Adrenal gland (tissue), 19 donors: ENCODE measurements at regions of chr3 and their contacts with region 1.

Region 1: GRCh38 chr3:143644370-143645089 is 203.7 kb downstream of the SLC9A9 start:
- DNase-seq: peak in 6 of 7 donors; percentile 17 to 77 (median 32)
- H3K4me3 ChIP-seq: no peak overlapping the region
- H3K27ac ChIP-seq: no peak overlapping the region
- H3K4me1 ChIP-seq: no peaks in the 10 kb centered on the region
- H3K27me3 ChIP-seq: no peaks in the 10 kb centered on the region
- CTCF ChIP-seq: peak in 5 of 6 experiments; percentile 21 to 57 (median 44)
- POLR2A ChIP-seq: no peak

Region 2: DNA sequence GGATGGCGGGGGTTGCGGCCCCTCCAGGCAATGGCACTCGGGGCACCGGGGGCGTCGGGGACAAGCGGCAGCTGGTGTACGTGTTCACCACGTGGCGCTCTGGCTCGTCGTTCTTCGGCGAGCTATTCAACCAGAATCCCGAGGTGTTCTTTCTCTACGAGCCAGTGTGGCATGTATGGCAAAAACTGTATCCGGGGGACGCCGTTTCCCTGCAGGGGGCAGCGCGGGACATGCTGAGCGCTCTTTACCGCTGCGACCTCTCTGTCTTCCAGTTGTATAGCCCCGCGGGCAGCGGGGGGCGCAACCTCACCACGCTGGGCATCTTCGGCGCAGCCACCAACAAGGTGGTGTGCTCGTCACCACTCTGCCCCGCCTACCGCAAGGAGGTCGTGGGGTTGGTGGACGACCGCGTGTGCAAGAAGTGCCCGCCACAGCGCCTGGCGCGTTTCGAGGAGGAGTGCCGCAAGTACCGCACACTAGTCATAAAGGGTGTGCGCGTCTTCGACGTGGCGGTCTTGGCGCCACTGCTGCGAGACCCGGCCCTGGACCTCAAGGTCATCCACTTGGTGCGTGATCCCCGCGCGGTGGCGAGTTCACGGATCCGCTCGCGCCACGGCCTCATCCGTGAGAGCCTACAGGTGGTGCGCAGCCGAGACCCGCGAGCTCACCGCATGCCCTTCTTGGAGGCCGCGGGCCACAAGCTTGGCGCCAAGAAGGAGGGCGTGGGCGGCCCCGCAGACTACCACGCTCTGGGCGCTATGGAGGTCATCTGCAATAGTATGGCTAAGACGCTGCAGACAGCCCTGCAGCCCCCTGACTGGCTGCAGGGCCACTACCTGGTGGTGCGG is 523.1 kb before region 1 on chr3:
- intact Hi-C with region 1: loop called in 1 of 2 experiments (anchors 10 kb)
- DNase-seq: peak; percentile 20 to 64 (median 27)
- H3K4me3 ChIP-seq: peak overlapping the region in 1 of 4 donors; percentile 59
- H3K27ac ChIP-seq: no peak overlapping the region
- H3K4me1 ChIP-seq: peaks cover 0 to 19% of the 10 kb centered on the region in 2 donors
- H3K27me3 ChIP-seq: peaks cover 17% of the 10 kb centered on the region
- CTCF ChIP-seq: peak in 4 of 6 experiments; percentile 17 to 27 (median 25)
- POLR2A ChIP-seq: no peak

Region 3: DNA sequence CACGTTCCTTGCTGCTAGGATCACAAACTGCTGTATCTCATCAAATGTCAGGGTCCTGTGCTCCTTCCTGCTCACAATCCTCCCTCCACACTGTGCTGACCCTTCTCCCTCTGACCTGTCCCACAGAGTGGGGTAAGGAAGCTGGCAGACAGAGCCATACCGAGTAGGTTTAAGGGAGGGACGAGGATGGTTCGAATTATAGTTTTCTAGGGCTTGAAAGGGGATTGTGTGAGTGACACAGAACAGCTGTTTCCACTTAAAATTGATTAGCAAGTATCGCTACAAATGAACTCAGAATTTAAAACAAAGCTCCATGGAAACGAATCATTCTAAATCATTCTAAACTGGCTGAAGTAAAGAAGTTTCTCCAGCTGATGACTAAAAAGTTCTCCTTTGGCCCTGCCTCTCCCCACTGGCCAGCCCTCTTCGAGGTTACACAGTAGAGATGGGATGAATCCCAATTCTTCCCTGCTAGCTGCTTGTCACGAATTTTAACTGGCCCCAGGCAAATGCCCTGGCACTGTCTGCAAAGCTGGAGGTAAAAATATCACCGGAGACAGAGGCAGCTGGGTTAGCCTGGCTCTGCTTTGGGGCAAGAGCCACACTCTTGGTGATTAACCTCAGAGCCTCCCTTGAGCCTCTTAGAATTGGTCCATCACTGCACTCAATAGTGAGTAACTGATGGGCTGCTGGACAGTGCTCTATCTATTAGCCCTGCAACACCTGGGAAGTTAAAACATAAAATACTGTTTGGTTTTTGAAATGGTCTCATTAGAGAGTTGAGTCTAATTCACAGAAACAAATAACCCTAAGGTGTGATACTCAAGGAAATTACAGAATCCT is 330.1 kb before region 1 on chr3:
- intact Hi-C with region 1: no loop called
- DNase-seq: no peak
- H3K4me3 ChIP-seq: no peak overlapping the region
- H3K27ac ChIP-seq: no peak overlapping the region
- H3K4me1 ChIP-seq: no peaks in the 10 kb centered on the region
- H3K27me3 ChIP-seq: no peaks in the 10 kb centered on the region
- CTCF ChIP-seq: no peak
- POLR2A ChIP-seq: no peak

Region 4: DNA sequence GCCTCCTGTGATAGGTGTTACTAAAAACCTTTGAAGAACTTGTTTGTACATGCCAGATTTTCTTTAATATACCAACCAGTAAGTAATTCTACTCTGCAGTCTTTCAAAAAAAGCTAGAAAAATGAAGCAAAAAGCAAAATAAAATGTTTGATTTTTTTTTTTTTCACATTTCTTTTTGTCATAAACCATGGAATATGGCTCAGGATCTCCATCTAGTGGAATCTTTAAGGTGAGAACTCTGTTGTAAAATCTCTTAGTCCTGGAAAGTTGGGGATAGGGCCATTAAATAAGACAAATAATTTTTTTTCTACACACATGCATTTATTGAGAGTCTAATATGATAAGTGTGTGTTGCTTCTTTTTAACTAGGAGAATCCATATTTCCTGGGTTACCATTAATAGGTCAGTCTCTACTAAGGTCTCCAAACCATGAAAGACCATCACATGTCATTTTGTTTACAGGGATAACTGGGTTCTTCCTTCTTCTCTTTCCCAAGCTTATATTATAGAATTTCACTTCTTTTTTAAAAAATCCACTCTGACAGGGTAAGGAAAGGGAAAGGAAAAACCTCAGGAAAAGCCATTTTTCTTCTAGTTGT is 119.1 kb after region 1 on chr3:
- intact Hi-C with region 1: no loop called
- DNase-seq: no peak
- H3K4me3 ChIP-seq: no peak overlapping the region
- H3K27ac ChIP-seq: no peak overlapping the region
- H3K4me1 ChIP-seq: no peaks in the 10 kb centered on the region
- H3K27me3 ChIP-seq: no peaks in the 10 kb centered on the region
- CTCF ChIP-seq: peak in 5 of 6 experiments; percentile 8 to 44 (median 21)
- POLR2A ChIP-seq: no peak